ENCODE measurements at regions of chr11 and their contacts with region 1.

Region 1: GRCh38 chr11:72413914-72414628 is 20.3 kb downstream of the CLPB start:
- DNase-seq: peak; percentile 64
- ATAC-seq: peak; percentile 37
- H3K4me3 Mint-ChIP-seq: no peak overlapping the region
- H3K27ac Mint-ChIP-seq: no peak overlapping the region
- H3K4me1 Mint-ChIP-seq: peaks cover 33% of the 10 kb centered on the region
- H3K27me3 Mint-ChIP-seq: no peaks in the 10 kb centered on the region
- CTCF ChIP-seq: no peak

Region 2: DNA sequence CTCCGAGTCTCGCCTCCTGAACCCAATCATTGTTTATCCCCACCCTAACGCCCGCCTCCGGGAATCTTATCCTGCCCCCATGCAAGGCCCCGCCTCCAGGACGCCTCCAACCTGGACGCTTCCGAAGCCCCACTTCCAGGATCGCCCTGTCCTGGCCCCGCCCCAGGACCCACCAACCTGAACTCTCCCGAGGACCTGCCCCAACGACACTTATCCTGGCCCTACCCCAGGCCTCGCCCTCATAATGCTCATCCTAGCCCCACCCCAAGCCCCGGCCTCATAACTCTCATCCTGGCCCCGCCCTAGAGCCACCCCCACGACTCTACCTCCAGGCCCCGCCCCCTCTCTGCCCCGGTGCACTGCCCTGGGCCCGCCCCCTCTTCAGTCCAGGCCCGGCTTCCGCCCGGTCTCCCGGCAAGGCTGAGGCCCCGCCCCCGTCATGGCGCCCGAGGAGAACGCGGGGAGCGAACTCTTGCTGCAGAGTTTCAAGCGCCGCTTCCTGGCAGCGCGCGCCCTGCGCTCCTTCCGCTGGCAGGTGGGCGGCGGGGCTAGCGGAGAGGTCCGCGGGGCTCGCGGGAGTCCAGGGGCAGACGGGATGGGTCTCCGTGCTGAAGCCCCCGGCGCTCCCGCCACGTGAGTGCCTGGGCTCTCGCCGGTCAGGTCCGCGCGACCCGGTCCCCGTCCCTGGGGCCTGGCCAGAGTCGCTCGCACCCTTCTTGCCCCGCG is 626.8 kb before region 1 on chr11:
- CTCF ChIA-PET with region 1: no interaction called
- POLR2A ChIA-PET with region 1: no interaction called
- intact Hi-C with region 1: loop called (anchors 5 kb)
- DNase-seq: peak; percentile 95
- ATAC-seq: peak; percentile 95
- H3K4me3 Mint-ChIP-seq: peak overlapping the region; percentile 95
- H3K27ac Mint-ChIP-seq: peak overlapping the region; percentile 96
- H3K4me1 Mint-ChIP-seq: peaks cover 19% of the 10 kb centered on the region
- H3K27me3 Mint-ChIP-seq: no peaks in the 10 kb centered on the region
- CTCF ChIP-seq: no peak

Region 3: DNA sequence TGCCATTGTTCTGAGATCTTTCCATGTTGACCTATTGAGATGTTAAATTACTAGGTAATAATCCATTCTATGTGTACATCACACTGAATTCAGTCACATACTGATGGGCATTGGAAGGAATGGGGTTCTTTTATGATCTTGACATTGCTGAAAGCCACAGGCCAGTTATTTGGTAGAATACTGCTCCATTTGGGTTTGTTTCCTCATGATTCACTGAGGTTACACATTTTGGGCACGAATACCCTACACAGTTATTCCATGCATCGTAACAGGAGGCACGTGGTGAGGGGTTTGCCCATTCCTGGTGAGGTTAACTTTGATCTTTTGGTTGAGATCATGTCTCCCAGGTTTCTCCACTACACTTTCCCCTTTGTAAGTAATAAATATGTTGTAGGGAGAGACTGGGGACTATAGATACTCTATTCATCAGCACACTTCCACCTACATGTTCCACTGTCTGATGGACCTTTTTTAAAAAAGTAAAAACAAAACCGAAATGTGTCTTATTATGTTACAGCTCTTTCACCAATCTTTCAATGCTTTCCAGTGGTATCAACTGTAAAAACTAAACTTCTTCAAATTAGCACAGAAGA is 234.2 kb before region 1 on chr11:
- CTCF ChIA-PET with region 1: interaction called, 4 read pairs
- POLR2A ChIA-PET with region 1: no interaction called
- intact Hi-C with region 1: loop called (anchors 5 kb)
- DNase-seq: no peak
- ATAC-seq: no peak
- H3K4me3 Mint-ChIP-seq: no peak overlapping the region
- H3K27ac Mint-ChIP-seq: no peak overlapping the region
- H3K4me1 Mint-ChIP-seq: peaks cover 4% of the 10 kb centered on the region
- H3K27me3 Mint-ChIP-seq: peaks cover 22% of the 10 kb centered on the region
- CTCF ChIP-seq: no peak

Region 4: GRCh38 chr11:72238040-72238450 is 176.0 kb before region 1 on chr11:
- CTCF ChIA-PET with region 1: interaction called, 3 read pairs
- POLR2A ChIA-PET with region 1: no interaction called
- intact Hi-C with region 1: loop called (anchors 5 kb)
- DNase-seq: no peak
- ATAC-seq: peak; percentile 68
- H3K4me3 Mint-ChIP-seq: no peak overlapping the region
- H3K27ac Mint-ChIP-seq: no peak overlapping the region
- H3K4me1 Mint-ChIP-seq: peaks cover 41% of the 10 kb centered on the region
- H3K27me3 Mint-ChIP-seq: peaks cover 33% of the 10 kb centered on the region
- CTCF ChIP-seq: no peak

Region 5: DNA sequence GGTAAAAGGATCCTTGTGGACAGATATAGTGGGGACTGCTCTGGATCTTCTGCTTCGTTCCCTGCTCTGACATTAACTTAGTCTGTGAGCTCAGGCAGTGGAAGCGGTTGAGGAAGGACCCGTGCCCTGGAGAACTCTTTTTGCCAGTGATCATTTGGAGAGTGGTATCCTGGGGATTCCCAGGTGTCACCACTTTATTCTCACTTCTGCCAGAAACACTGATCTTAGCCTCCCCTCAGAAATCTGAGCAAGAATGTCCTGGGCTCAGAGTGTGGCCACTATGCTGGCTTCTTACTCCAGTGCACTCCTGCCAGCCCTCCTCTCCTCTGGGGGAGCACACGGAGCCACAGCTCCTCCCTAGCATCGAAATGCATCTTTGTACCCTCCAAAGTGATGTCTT is 162.5 kb before region 1 on chr11:
- CTCF ChIA-PET with region 1: no interaction called
- POLR2A ChIA-PET with region 1: no interaction called
- intact Hi-C with region 1: no loop called
- DNase-seq: no peak
- ATAC-seq: no peak
- H3K4me3 Mint-ChIP-seq: no peak overlapping the region
- H3K27ac Mint-ChIP-seq: no peak overlapping the region
- H3K4me1 Mint-ChIP-seq: no peaks in the 10 kb centered on the region
- H3K27me3 Mint-ChIP-seq: peaks cover 21% of the 10 kb centered on the region
- CTCF ChIP-seq: no peak

Region 6: GRCh38 chr11:72293910-72294615 is 120.0 kb before region 1 on chr11:
- CTCF ChIA-PET with region 1: interaction called, 11 read pairs
- POLR2A ChIA-PET with region 1: no interaction called
- intact Hi-C with region 1: loop called (anchors 1 kb)
- DNase-seq: no peak
- ATAC-seq: no peak
- H3K4me3 Mint-ChIP-seq: no peak overlapping the region
- H3K27ac Mint-ChIP-seq: no peak overlapping the region
- H3K4me1 Mint-ChIP-seq: peaks cover 17% of the 10 kb centered on the region
- H3K27me3 Mint-ChIP-seq: no peaks in the 10 kb centered on the region
- CTCF ChIP-seq: no peak

Region 7: DNA sequence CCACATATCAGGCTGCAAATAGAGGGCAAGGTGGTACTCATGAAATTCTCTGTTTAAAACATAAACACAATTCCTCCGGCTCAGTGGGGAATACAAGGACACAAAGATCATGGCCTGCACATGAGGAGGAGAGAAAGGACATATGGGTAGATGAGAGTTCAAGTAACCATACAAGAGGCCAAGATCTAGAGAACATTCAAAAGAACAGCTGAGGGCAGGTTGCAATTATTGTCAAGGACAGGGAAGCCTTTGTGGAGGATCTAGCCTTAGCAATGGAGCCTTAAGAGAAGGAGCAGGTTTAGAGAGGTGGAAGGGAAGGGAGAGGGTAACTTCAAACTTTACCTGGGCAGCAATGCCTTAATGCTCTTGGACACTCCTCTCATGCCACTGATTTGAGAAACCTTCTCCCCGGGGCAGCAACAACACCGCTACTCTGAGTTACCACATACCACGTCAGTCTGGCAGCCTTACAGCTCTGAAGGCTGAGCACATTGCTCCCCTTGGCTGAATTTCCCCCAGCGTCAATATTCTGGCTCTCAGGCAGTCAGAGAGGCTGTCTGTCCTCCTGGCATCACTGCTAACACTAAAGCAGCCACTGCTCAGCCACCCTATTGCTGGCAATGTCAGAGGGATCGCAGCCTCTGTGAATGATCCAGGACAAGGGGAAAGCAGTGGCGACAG is 35.2 kb before region 1 on chr11:
- CTCF ChIA-PET with region 1: no interaction called
- POLR2A ChIA-PET with region 1: no interaction called
- intact Hi-C with region 1: no loop called
- DNase-seq: no peak
- ATAC-seq: no peak
- H3K4me3 Mint-ChIP-seq: no peak overlapping the region
- H3K27ac Mint-ChIP-seq: no peak overlapping the region
- H3K4me1 Mint-ChIP-seq: no peaks in the 10 kb centered on the region
- H3K27me3 Mint-ChIP-seq: no peaks in the 10 kb centered on the region
- CTCF ChIP-seq: no peak

Region 8: GRCh38 chr11:72391638-72392423 is 22.2 kb before region 1 on chr11:
- CTCF ChIA-PET with region 1: interaction called, 4 read pairs
- POLR2A ChIA-PET with region 1: interaction called, 3 read pairs
- intact Hi-C with region 1: loop called (anchors 2 kb)
- DNase-seq: no peak
- ATAC-seq: peak; percentile 73
- H3K4me3 Mint-ChIP-seq: no peak overlapping the region
- H3K27ac Mint-ChIP-seq: no peak overlapping the region
- H3K4me1 Mint-ChIP-seq: peaks cover 39% of the 10 kb centered on the region
- H3K27me3 Mint-ChIP-seq: no peaks in the 10 kb centered on the region
- CTCF ChIP-seq: no peak